Caco-2 (cell line): ENCODE measurements at regions of chr2 and their contacts with region 1.

Region 1: DNA sequence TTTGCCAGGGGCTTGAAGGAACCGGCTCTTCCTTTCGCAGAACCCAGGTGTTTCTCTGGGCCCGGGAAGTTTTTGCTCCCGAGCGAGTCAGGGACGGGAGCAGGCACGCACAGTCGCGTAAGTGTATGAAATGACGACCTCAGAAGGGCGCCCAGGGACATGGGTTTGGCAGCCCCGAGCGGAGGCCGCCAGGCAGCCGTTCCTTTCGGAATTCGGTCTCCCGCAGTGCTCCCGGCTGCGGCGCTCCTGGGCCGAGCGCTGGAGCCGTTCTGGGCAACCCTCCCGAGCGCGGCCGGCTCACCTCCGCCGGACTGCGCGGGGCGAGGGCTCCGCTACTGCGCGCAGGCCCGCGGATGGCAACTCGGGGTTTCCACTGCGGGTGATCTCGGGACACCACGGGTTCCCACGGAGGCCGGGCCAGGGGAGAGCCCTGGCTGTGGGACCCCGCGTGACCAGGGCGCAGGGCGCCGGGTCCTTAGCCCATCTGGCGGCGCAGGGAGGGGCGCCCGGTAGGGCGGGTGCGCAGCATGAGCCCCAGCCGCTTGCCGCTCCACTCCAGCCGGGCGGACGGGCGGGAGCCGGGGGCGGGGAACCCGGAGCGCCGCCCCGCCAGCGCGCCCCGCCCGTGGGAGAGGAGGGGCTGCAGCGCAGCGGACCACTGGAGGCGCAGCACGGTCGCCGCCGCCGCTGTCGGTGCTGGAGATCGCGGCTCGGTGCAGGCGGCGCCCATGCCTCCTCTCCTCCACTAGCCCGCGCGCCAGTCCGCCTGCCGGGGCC is at the start of gene OSBPL6:
- DNase-seq: peak; percentile 66 to 85
- H3K4me3 ChIP-seq: peak within 1 kb of the TSS; percentile 70
- H3K4me3 Mint-ChIP-seq: peak within 1 kb of the TSS; percentile 76
- H3K27ac Mint-ChIP-seq: no peak within 1 kb of the TSS
- H3K4me1 ChIP-seq: peaks cover 10% of the 10 kb centered on the region; the same call in 1 of the 2 replicates
- H3K4me1 Mint-ChIP-seq: no peaks in the 10 kb centered on the region
- H3K27me3 ChIP-seq: peaks cover 6% of the 10 kb centered on the region
- H3K27me3 Mint-ChIP-seq: peaks cover 22% of the 10 kb centered on the region
- CTCF ChIP-seq: no peak
- total RNA-seq, gene OSBPL6: 1.0 and 1.5 TPM in 2 replicates

Region 2: GRCh38 chr2:178128836-178129630 is 65.0 kb before region 1 on chr2:
- CTCF ChIA-PET with region 1: no interaction called
- POLR2A ChIA-PET with region 1: no interaction called
- intact Hi-C with region 1: loop called (anchors 2 kb)
- DNase-seq: no peak
- H3K4me3 ChIP-seq: no peak overlapping the region
- H3K4me3 Mint-ChIP-seq: no peak overlapping the region
- H3K27ac Mint-ChIP-seq: no peak overlapping the region
- H3K4me1 ChIP-seq: 0 out of 2 replicates have a peak, but pooled peaks cover 5% of the 10 kb centered on the region
- H3K4me1 Mint-ChIP-seq: peaks cover 9% of the 10 kb centered on the region
- H3K27me3 ChIP-seq: no peaks in the 10 kb centered on the region
- H3K27me3 Mint-ChIP-seq: no peaks in the 10 kb centered on the region
- CTCF ChIP-seq: no peak

Region 3: GRCh38 chr2:178397002-178397605 is 203.1 kb after region 1 on chr2:
- CTCF ChIA-PET with region 1: no interaction called
- POLR2A ChIA-PET with region 1: no interaction called
- intact Hi-C with region 1: loop called (anchors 5 kb)
- DNase-seq: peak in 1 of 2 experiments; percentile 16
- H3K4me3 ChIP-seq: no peak overlapping the region
- H3K4me3 Mint-ChIP-seq: no peak overlapping the region
- H3K27ac Mint-ChIP-seq: no peak overlapping the region
- H3K4me1 ChIP-seq: peaks cover 7% of the 10 kb centered on the region
- H3K4me1 Mint-ChIP-seq: peaks cover 22% of the 10 kb centered on the region
- H3K27me3 ChIP-seq: no peaks in the 10 kb centered on the region
- H3K27me3 Mint-ChIP-seq: no peaks in the 10 kb centered on the region
- CTCF ChIP-seq: peak; percentile 55 to 56